Mammary epithelial cell (primary cell): ENCODE measurements at regions of chr10 and their contacts with region 1.

Region 1: DNA sequence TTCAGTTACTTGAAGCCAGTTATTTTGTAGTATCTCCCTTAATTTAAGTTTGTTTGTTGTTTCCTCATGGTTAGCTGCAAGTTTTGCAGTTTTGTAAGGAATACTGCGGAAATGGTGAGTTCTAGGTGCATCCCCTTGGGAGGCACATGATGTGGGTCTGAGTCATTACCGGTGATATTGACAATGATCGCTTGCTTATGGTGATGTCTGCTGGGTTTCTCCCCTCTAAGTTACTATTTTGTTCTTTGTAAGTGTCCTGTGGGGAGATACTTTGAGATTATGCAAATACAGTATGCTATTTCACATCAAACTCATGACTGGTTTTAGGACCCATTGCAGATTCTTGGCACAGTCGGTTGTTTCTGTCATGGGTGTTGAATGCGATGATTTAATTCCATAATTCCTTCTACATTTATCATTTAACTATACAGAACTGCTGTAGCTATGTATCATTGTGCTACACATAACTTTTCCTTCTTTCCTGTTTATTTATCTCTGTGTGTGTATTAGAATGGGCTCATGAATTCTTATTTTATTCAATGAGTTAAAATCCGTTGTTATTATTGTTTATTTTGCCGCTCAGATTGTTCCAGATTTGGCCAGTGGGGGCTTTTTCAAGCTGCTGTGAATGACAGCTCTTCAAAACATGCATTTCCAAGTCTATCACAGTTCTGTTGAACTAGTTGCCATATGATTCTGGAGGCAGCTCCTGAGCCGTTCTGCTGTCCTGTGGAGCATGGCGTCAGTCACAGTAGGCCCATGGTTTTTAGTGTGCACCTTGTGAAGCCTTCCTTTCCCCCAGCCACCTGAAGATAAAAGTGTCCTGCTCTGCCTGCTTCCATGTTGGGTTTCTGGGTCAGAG is 18.4 kb downstream of the TSPAN14 start:
- DNase-seq: peak; percentile 97
- H3K4me3 ChIP-seq: no peak overlapping the region
- H3K27ac ChIP-seq: peak overlapping the region; percentile 92
- H3K4me1 ChIP-seq: peaks cover 70% of the 10 kb centered on the region
- H3K27me3 ChIP-seq: no peaks in the 10 kb centered on the region
- CTCF ChIP-seq: no peak

Region 2: DNA sequence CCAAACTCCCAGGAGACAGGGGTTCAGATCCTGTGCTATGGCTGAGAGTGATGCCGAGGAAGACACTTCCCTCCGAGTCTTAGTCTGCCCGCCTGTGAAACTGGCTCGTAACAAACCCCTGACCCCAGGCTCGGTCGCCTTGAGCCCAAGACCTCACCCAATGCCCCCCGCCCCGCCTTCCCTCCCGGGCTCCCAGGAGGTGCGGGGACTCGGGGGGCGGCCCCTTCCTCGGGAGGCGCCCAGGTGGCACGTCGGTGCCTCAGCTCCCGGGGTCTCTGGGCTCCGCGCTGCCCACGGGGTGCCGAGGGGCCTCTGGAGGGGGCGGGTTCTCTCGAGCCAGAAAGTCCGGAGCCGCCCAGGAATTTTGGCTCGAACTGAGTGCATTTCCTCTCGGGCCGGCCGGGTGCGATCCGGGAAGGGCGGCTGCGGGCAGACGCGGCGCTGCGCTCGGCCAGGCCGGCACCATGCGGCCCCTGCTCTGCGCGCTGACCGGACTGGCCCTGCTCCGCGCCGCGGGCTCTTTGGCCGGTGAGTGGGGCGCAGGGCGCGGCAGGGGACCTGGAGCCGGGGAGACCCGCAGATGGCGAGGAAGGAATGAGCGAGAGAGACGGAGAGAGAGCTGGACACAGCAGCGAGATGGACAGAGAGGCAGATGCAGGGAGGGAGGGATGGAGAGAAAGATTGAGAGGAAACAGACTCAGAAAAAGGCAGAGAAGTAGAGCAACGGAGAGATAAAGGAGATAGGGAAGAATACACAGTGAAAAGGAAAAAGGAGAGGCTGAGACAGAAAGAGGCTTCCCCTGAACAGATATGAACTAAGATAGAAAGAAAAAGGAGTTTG is 339.9 kb before region 1 on chr10 and contains the start of gene PLAC9:
- CTCF ChIA-PET with region 1: no interaction called
- dilution Hi-C with region 1: no loop called
- in situ Hi-C with region 1: no loop called
- intact Hi-C with region 1: no loop called
- DNase-seq: no peak
- H3K4me3 ChIP-seq: peak within 1 kb of the TSS in 2 of 3 experiments; percentile 23 to 36
- H3K27ac ChIP-seq: no peak within 1 kb of the TSS
- H3K4me1 ChIP-seq: peaks cover 7% of the 10 kb centered on the region
- H3K27me3 ChIP-seq: no peaks in the 10 kb centered on the region
- CTCF ChIP-seq: no peak
- total RNA-seq, gene PLAC9: 0.50 to 0.68 TPM

Region 3: DNA sequence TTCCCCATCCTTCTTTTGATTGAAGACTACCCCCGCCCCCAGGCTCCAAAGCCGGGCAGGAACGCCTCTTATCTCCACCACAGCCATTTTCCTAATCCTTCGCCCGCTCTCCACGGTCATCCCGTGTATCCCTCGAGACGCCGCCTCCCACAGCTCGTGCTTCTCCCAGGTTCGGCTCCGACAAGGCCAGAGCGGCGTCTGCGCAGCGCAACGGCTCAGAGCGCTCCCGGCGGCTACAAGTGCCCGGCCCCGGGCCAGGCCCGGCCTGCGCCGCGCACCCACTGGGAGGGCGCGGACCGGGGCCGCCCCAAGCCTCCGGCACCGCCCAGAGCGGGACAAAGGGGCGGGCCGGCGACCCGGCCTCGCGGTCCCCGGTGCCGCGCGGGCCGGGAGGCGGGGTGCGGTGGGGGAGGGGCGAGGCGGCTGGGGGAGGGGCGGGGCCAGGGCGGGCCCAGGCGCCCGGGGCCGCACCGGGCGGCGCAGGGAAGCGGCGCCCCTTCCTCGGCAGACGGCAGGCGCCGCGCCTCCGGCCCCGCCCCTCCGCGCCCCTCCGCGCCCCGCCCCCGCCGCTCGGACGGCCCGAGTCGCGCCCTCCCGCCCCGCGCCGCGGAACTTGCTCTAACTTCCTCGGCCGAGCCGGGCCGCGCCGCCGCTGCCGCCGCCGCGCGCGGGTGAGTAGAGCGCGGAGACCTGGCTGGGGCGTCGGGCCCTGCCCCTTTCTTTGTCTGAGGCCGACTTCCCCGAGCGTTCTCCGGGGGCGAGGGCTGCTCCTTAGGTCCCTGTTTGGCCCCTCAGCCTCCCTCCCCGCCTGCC is 18.6 kb before region 1 on chr10 and contains the start of gene TSPAN14:
- CTCF ChIA-PET with region 1: interaction called, 3 read pairs
- dilution Hi-C with region 1: no loop called
- in situ Hi-C with region 1: no loop called
- intact Hi-C with region 1: loop called (anchors 1 kb)
- DNase-seq: peak; percentile 78
- H3K4me3 ChIP-seq: peak within 1 kb of the TSS; percentile 78 to 90 (median 86)
- H3K27ac ChIP-seq: peak within 1 kb of the TSS; percentile 71
- H3K4me1 ChIP-seq: peaks cover 43% of the 10 kb centered on the region
- H3K27me3 ChIP-seq: no peaks in the 10 kb centered on the region
- CTCF ChIP-seq: no peak
- total RNA-seq, gene TSPAN14: 47.8 to 102 TPM

Region 4: GRCh38 chr10:80493522-80494051 is 21.1 kb after region 1 on chr10:
- CTCF ChIA-PET with region 1: no interaction called
- dilution Hi-C with region 1: no loop called
- in situ Hi-C with region 1: no loop called
- intact Hi-C with region 1: loop called (anchors 2 kb)
- DNase-seq: no peak
- H3K4me3 ChIP-seq: no peak overlapping the region
- H3K27ac ChIP-seq: no peak overlapping the region
- H3K4me1 ChIP-seq: peaks cover 49% of the 10 kb centered on the region
- H3K27me3 ChIP-seq: no peaks in the 10 kb centered on the region
- CTCF ChIP-seq: no peak

Region 5: GRCh38 chr10:80612261-80612660 is 139.8 kb after region 1 on chr10:
- CTCF ChIA-PET with region 1: no interaction called
- dilution Hi-C with region 1: no loop called
- in situ Hi-C with region 1: no loop called
- intact Hi-C with region 1: no loop called
- DNase-seq: peak; percentile 17
- H3K4me3 ChIP-seq: no peak overlapping the region
- H3K27ac ChIP-seq: no peak overlapping the region
- H3K4me1 ChIP-seq: no peaks in the 10 kb centered on the region
- H3K27me3 ChIP-seq: no peaks in the 10 kb centered on the region
- CTCF ChIP-seq: no peak